Heart right ventricle (tissue), 16 donors: ENCODE measurements at regions of chrX and their contacts with region 1.

Region 1: GRCh38 chrX:155048977-155049619 is 21.8 kb downstream of the CMC4 start:
- DNase-seq: peak in 1 of 2 donors; percentile 46
- ATAC-seq: peak; percentile 25 to 69 (median 60)
- H3K4me3 ChIP-seq: no peak overlapping the region
- H3K27ac ChIP-seq: peak overlapping the region in 1 of 10 donors; percentile 31
- H3K4me1 ChIP-seq: peaks cover 0 to 30% (median 5%) of the 10 kb centered on the region in 9 donors
- H3K27me3 ChIP-seq: peaks cover 0 to 4% (median 0%) of the 10 kb centered on the region in 7 donors
- CTCF ChIP-seq: peak; percentile 34 to 72 (median 60)

Region 2: GRCh38 chrX:154980330-154981096 is 68.6 kb before region 1 on chrX:
- intact Hi-C with region 1: loop called in 3 of 10 experiments (anchors 5 to 10 kb)
- DNase-seq: peak; percentile 44 to 74
- ATAC-seq: peak; percentile 87 to 94 (median 90)
- H3K4me3 ChIP-seq: peak overlapping the region in 7 of 10 donors; percentile 21 to 50 (median 43)
- H3K27ac ChIP-seq: peak overlapping the region in 4 of 10 donors; percentile 5 to 66 (median 40)
- H3K4me1 ChIP-seq: peaks cover 0 to 8% (median 0%) of the 10 kb centered on the region in 9 donors
- H3K27me3 ChIP-seq: no peaks in the 10 kb centered on the region
- CTCF ChIP-seq: peak; percentile 32 to 75 (median 69)

Region 3: DNA sequence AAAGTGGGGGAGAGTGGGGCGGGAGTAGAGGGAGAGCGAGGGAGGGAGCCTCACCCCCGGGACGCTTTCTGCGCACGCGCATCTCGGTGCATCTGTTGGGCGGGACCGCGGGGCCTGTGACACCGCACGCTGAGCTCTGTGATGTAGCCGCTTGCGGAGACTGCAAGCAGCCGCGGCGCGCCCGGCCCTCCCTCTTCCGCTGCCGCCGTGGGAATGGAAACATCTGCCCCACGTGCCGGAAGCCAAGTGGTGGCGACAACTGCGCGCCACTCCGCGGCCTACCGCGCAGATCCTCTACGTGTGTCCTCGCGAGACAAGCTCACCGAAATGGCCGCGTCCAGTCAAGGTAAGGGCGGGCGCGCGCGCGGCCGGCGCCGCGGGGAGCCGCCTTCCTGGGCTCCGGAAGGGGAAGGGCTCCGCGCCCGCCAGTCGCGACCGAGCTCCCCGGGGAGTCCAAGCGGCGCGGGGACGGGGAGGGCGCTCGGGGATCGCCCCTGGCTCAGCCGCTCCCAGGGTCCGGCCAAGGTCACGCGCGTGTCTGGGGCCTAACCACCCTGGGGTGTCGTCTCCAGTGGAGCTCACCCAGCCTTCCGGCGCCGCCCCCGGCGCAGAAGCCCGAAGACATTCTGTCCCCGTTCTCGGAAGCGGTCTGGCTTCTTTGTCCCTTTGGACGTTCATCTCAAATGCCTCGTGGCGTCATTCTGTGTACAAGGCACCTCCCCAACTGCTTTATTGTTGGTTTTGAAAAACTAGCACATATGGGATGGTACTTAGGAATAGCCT is 22.2 kb before region 1 on chrX and contains the start of gene FUNDC2:
- intact Hi-C with region 1: loop called in 1 of 10 experiments (anchors 2 kb)
- DNase-seq: peak; percentile 92 to 94
- ATAC-seq: peak; percentile 91 to 97 (median 95)
- H3K4me3 ChIP-seq: peak within 1 kb of the TSS; percentile 32 to 75 (median 62)
- H3K27ac ChIP-seq: peak within 1 kb of the TSS; percentile 85 to 99 (median 98)
- H3K4me1 ChIP-seq: peaks cover 0 to 34% (median 4%) of the 10 kb centered on the region in 9 donors
- H3K27me3 ChIP-seq: no peaks in the 10 kb centered on the region
- CTCF ChIP-seq: no peak
- total RNA-seq, gene FUNDC2: 249 to 428 (median 312) TPM

Region 4: DNA sequence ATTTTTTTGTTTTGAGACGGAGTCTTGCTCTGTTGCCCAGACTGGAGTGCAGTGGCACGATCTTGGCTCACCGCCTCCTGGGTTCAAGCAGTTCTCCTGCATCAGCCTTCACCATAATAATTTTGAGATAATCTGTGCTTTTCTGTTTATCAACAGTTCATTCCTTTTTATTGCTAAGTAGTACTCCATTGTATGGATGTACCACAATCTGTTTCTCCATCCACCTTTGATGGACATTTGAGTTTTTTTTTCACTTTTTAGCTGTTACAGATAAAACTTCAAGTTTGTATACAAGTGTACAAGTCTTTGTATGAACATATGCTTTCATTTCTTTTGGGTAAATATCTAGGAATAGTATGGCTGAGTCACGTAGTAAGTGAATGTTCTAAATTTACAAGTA is 13.4 kb before region 1 on chrX:
- intact Hi-C with region 1: loop called in 1 of 10 experiments (anchors 1 kb)
- DNase-seq: no peak
- ATAC-seq: no peak
- H3K4me3 ChIP-seq: no peak overlapping the region
- H3K27ac ChIP-seq: no peak overlapping the region
- H3K4me1 ChIP-seq: peaks cover 0 to 10% (median 0%) of the 10 kb centered on the region in 9 donors
- H3K27me3 ChIP-seq: no peaks in the 10 kb centered on the region
- CTCF ChIP-seq: no peak

Region 5: DNA sequence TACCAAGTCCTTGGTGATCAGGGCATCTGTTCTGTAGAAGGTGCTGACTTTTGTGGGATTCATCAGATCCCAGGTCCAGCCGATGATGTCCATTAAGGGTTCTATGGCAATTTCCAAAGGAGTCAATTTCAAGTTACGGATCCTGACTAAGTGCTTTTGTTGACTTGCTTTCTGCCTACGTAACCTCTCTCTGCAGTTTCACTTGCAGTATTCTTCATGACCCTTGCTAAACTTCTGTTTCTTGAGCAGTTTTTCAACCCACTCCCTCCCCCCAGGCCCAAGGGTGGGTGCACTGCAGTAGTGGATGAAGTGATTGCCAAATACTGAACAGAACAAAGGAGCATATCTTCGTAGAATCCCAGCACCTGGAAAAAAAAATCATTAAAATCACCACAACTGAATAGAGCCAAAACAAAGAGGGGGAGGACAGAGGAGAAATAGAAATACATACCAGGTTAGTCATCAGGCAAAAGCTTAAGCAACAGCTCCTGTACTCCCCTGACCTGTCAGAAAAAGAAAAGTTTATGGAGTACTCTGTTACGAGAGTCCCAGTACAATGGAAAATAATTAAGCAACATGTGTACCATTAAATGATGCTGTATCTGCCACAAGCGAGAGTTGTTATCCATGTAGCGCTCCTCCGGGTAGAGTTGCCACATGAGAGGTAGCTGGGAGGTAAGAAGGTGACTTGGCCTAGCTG is 16.1 kb after region 1 on chrX:
- intact Hi-C with region 1: no loop called
- DNase-seq: no peak
- ATAC-seq: no peak
- H3K4me3 ChIP-seq: no peak overlapping the region
- H3K27ac ChIP-seq: no peak overlapping the region
- H3K4me1 ChIP-seq: peaks cover 0 to 26% (median 8%) of the 10 kb centered on the region in 9 donors
- H3K27me3 ChIP-seq: no peaks in the 10 kb centered on the region
- CTCF ChIP-seq: no peak

Region 6: GRCh38 chrX:155293771-155294170 is 244.7 kb after region 1 on chrX:
- intact Hi-C with region 1: no loop called
- DNase-seq: no peak
- ATAC-seq: no peak
- H3K4me3 ChIP-seq: no peak overlapping the region
- H3K27ac ChIP-seq: no peak overlapping the region
- H3K4me1 ChIP-seq: peaks cover 0 to 3% (median 0%) of the 10 kb centered on the region in 9 donors
- H3K27me3 ChIP-seq: no peaks in the 10 kb centered on the region
- CTCF ChIP-seq: no peak